Calu3 (cell line): ENCODE measurements at regions of chr2 and their contacts with region 1.

Region 1: GRCh38 chr2:157257312-157258252 is at the start of gene GALNT5:
- DNase-seq: peak; percentile 25
- H3K4me3 Mint-ChIP-seq: peak within 1 kb of the TSS; percentile 95
- H3K27ac Mint-ChIP-seq: peak within 1 kb of the TSS; percentile 91
- H3K4me1 Mint-ChIP-seq: peaks cover 55% of the 10 kb centered on the region
- H3K27me3 Mint-ChIP-seq: no peaks in the 10 kb centered on the region
- CTCF ChIP-seq: no peak
- total RNA-seq, gene GALNT5: 51.7 and 95.4 TPM in 2 replicates

Region 2: DNA sequence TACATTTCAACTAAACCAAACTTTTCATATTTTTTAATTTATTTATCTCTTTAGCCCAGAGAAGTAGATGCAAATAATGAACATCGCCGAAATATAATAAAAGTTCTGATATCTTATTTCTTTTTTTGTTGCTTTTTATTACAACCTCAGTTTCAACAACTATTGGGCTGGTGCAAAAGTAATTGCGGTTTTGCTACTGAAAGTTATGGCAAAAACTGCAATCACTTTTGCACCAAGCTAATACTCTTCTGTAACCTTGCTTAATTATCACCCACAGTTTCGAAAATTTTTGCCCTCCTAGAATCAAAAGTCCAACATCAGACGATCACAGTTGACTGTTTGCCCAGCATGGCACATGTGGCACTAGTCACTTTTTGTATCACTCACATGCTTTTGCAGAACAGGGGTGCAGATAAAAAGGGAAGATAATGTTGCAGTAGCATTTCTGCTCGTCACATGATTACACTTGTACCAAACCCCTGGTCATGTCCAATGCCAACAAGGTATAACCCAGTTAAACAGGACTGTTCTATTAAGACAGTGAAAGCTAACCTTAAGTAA is 242.5 kb before region 1 on chr2:
- CTCF ChIA-PET with region 1: no interaction called
- intact Hi-C with region 1: no loop called
- DNase-seq: no peak
- H3K4me3 Mint-ChIP-seq: no peak overlapping the region
- H3K27ac Mint-ChIP-seq: no peak overlapping the region
- H3K4me1 Mint-ChIP-seq: peaks cover 8% of the 10 kb centered on the region
- H3K27me3 Mint-ChIP-seq: no peaks in the 10 kb centered on the region
- CTCF ChIP-seq: no peak

Region 3: DNA sequence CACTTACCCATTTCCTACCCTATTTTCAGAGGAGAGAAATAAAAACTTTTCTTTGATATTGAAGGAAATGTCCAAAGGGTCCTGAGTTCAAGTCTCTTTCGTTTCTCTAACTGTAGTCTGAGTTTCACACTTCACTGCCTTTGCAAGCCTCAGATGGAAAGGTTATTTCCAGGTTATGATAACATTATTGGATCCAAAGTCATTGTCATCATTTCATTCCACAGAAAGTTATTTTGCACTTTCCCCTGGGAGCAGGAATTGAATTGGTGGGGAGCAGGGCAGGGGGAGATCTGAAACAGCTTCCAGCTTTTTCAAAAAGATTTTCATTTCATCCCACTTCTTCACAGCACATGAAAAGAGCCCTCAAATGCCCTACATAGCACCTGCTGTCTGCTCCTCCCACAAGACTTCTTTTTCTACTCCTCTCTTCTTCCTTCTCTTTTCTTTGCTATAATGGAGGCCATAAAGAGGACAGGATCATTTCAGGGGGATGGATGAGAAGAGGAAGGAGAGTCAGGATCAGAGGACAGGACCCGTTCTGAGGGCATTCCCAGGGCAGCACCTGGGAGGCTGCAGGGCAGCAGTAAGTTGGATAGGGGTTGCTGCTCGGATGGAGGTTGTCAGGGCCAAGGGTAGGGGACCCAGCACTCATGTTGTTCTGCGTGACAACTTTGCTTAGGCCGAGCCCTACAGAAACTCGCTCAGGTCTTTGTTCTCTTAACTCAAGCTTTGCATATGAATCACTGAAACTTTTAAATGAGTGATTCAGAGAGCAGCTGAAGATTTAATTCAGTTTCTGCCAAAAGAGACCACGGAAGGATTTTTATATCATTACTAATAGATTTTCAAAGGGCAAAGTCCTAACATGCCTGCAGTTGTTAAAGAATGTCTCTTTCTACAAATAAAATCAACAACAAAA is 11.5 kb before region 1 on chr2:
- CTCF ChIA-PET with region 1: interaction called, 6 read pairs
- intact Hi-C with region 1: loop called (anchors 1 kb)
- DNase-seq: peak; percentile 57
- H3K4me3 Mint-ChIP-seq: peak overlapping the region; percentile 19
- H3K27ac Mint-ChIP-seq: peak overlapping the region; percentile 89
- H3K4me1 Mint-ChIP-seq: peaks cover 40% of the 10 kb centered on the region
- H3K27me3 Mint-ChIP-seq: no peaks in the 10 kb centered on the region
- CTCF ChIP-seq: no peak